ENCODE measurements at regions of chr3 and their contacts with region 1.

Region 1: GRCh38 chr3:8501371-8502131 is at the start of gene LMCD1:
- DNase-seq: peak; percentile 85 to 94
- H3K4me3 ChIP-seq: peak within 1 kb of the TSS; percentile 78
- H3K27ac ChIP-seq: peak within 1 kb of the TSS; percentile 97
- H3K4me1 ChIP-seq: peaks cover 83% of the 10 kb centered on the region
- H3K27me3 ChIP-seq: no peaks in the 10 kb centered on the region
- CTCF ChIP-seq: no peak
- total RNA-seq, gene LMCD1: 10.0 and 10.3 TPM in 2 replicates

Region 2: GRCh38 chr3:8020047-8020841 is 481.3 kb before region 1 on chr3:
- CTCF ChIA-PET with region 1: no interaction called
- POLR2A ChIA-PET with region 1: no interaction called
- intact Hi-C with region 1: no loop called
- DNase-seq: no peak
- H3K4me3 ChIP-seq: no peak overlapping the region
- H3K27ac ChIP-seq: no peak overlapping the region
- H3K4me1 ChIP-seq: no peaks in the 10 kb centered on the region
- H3K27me3 ChIP-seq: no peaks in the 10 kb centered on the region
- CTCF ChIP-seq: no peak

Region 3: GRCh38 chr3:8441969-8442559 is 59.5 kb before region 1 on chr3:
- CTCF ChIA-PET with region 1: interaction called, 5 read pairs
- POLR2A ChIA-PET with region 1: interaction called, 9 read pairs
- intact Hi-C with region 1: loop called (anchors 1 kb)
- DNase-seq: peak in 1 of 2 experiments; percentile 8
- H3K4me3 ChIP-seq: no peak overlapping the region
- H3K27ac ChIP-seq: no peak overlapping the region
- H3K4me1 ChIP-seq: peaks cover 25% of the 10 kb centered on the region
- H3K27me3 ChIP-seq: no peaks in the 10 kb centered on the region
- CTCF ChIP-seq: peak; percentile 84

Region 4: DNA sequence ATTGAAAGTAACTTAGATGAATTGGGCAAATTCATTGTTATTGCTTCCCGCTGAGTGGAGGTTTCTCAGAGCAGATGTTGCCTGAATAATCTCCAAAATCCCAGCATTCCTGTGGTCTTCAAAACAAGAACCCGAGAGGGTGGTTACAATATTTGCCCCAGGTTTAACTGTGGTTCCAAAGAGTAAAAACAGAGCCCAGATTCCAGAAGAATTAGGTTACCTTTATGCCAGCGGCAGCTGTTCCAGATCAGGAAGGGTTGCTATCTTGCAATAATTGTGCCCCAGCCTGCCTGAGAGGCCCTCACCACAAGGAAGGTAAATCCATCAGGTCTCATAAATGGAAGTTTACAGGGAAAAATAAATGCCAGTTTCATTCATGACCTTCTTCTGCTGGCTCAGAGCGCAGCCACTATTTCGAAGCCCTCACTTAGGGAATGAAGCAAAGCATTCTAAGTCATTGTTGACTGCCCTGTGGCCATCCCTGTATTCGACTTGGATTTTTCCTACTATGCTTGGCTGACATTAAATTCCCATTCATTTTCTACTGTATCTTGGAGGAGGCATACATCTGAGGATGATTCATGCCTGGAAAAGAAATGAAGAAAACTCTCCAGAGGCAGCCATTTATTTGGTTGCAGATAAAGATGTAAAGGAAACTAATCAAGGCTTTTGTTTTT is 88.5 kb after region 1 on chr3:
- CTCF ChIA-PET with region 1: no interaction called
- POLR2A ChIA-PET with region 1: no interaction called
- intact Hi-C with region 1: no loop called
- DNase-seq: no peak
- H3K4me3 ChIP-seq: no peak overlapping the region
- H3K27ac ChIP-seq: no peak overlapping the region
- H3K4me1 ChIP-seq: no peaks in the 10 kb centered on the region
- H3K27me3 ChIP-seq: no peaks in the 10 kb centered on the region
- CTCF ChIP-seq: no peak

Region 5: DNA sequence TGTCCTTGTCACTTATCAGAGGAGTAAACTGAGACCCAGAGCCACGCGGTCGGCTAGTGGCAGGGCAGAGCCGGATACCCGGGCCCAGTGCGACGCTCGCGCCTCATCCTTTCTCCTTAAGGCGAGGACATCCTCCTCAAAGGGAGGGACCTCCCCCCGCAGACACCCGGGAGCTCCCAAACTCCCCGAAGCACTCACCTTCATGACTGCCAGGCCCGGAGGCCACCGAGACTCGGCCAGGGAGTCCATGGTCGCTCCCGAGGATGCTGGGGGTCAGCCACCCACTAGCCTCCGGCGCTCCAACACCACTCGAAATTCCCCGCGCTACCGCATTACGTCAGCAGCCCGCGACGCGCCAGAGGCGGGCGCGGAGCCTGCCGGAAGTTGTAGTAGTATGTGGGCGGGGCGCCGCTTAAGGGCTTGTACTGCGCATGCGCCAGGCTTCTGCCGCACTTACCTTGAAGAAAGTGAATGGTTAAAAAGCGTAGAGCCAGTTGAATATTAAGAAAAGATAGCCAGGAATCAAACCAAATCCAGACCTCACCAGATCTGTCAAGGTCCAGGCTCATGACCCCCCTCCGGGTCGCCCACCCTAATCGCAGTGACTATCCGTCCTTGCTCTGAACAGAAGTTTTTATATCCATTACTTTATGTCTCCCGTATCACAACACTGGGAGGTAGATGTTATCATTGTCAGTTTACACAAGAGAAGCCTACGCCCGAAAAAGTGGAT is 461.8 kb after region 1 on chr3 and contains the start of gene RAD18:
- CTCF ChIA-PET with region 1: no interaction called
- POLR2A ChIA-PET with region 1: no interaction called
- intact Hi-C with region 1: loop called (anchors 2 kb)
- DNase-seq: peak; percentile 70 to 90
- H3K4me3 ChIP-seq: peak within 1 kb of the TSS; percentile 69
- H3K27ac ChIP-seq: peak within 1 kb of the TSS; percentile 77
- H3K4me1 ChIP-seq: peaks cover 37% of the 10 kb centered on the region
- H3K27me3 ChIP-seq: no peaks in the 10 kb centered on the region
- CTCF ChIP-seq: no peak
- total RNA-seq, gene RAD18: 19.1 and 29.1 TPM in 2 replicates

Measured in PC-9 (cell line).